RWPE1 (cell line): ENCODE measurements at regions of chr14 and their contacts with region 1.

Region 1: DNA sequence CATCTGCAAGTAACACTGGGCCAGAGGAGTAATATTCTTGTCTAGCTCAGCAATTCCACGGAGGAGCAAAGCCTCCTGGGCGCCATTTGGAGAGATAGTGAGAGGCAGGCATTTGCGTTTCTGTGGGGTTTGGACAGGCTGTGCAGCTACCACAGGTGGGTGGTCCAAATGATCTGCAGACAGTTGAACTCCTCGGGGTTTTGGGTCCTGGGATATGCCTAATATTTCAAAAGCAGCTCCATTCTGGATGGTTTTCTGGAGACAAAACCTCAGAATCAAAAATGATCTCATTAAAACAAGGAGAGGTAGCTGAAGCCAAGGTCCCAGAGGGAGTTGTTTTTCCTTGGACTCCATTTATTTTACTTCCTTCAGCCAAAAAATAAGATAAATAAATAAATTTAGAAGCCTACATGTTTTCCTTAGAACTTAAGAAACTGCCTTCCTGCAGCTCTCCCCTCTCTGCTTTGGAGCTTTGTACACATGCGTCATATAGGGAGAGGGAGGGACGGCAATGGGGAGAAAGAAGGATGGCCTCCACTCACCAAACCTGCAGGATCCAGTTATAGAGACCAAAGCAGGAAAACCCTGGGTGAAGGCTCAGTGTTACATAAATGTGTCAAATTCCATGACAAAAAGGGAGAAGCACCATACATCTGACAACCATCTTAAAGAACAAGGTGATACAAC is 227.3 kb upstream of the DAAM1 start:
- DNase-seq: no peak
- H3K27ac ChIP-seq: no peak overlapping the region
- CTCF ChIP-seq: no peak

Region 2: GRCh38 chr14:58014778-58015177 is 946.4 kb before region 1 on chr14:
- CTCF ChIA-PET with region 1: interaction called, 11 read pairs
- POLR2A ChIA-PET with region 1: no interaction called
- DNase-seq: no peak
- H3K27ac ChIP-seq: no peak overlapping the region
- CTCF ChIP-seq: no peak

Region 3: DNA sequence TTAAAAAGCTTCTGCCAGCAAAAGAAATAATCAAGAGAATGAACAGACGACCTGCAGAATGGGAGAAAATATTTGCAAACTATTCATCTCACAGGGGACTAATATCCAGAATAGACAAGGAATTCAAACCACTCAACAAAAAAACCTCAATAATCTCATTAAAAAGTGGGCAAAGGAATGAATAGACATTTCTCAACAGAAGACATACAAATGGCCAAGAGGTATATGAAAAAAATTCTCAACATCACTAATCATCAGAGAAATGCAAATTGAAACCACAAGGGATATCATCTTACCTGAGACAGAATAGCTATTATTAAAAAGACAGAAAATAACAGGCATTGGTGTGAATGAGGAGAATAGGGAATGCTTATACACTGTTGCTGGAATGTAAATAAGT is 53.4 kb before region 1 on chr14:
- CTCF ChIA-PET with region 1: no interaction called
- POLR2A ChIA-PET with region 1: no interaction called
- DNase-seq: no peak
- H3K27ac ChIP-seq: no peak overlapping the region
- CTCF ChIP-seq: no peak